Right lobe of liver (tissue), 6 donors: ENCODE measurements at regions of chr15 and their contacts with region 1.

Region 1: DNA sequence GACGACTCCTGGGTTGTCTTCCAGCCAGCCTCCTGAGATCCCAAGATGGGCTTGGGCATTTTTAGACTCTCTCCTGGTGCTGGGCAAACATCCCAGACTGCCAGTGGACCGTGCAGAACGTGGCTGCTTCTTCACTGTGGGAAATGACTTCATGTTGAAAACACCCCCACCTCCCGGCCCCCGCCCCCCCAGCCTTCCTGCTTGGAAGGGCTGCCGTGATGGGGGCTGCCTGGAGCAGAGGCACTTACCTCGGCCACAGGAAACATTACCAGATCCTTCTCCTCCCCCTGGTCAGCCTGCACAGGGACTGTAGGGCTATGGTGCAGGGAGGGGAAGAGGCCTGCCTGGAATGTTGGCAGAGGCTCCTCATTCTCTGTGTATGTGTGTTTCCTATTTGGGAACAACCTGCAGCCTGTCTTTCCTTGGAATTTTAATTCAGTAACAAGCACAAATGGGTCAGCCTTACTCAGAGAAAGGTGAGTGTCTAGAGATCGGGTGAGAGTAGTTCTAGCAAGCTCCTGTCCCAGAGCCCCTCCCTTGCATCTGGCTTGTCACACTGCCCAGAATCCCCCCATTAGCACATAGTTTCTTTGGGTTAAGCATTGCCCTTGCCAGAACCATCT is 90.8 kb downstream of the ANP32A start:
- DNase-seq: no peak
- ATAC-seq: peak in 3 of 4 donors; percentile 35 to 72 (median 64)
- H3K4me3 ChIP-seq: no peak overlapping the region
- H3K27ac ChIP-seq: no peak overlapping the region
- H3K4me1 ChIP-seq: no peaks in the 10 kb centered on the region
- H3K27me3 ChIP-seq: no peaks in the 10 kb centered on the region
- CTCF ChIP-seq: no peak
- POLR2A ChIP-seq: no peak

Region 2: DNA sequence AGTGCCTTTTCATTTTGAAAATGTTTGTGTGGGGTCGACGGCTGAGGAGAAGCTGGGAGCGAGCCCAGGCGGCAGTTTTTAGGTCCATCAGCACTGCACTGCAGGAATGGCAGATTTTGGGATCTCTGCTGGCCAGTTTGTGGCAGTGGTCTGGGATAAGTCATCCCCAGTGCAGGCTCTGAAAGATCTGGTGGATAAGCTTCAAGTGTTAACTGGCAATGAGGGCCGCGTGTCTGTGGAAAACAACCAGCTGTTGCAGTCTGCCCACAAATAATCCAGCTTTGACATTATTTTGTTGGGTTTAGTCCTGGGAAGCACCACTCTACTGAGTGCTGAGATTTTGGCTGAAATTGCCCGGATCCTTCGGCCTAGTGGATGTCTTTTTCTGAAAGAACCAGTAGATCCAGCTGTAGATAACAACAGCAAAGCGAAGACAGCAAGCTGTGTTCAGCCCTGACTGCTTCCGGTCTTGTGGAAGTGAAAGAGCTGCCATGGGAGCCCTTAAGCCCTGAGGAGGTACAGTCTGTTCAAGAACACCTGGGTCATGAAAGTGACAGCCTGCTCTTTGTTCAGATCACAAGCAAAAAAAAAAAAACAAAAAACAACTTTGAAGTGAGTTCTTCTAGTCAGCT is 103.9 kb after region 1 on chr15:
- intact Hi-C with region 1: no loop called
- DNase-seq: no peak
- ATAC-seq: no peak
- H3K4me3 ChIP-seq: no peak overlapping the region
- H3K27ac ChIP-seq: no peak overlapping the region
- H3K4me1 ChIP-seq: no peaks in the 10 kb centered on the region
- H3K27me3 ChIP-seq: no peaks in the 10 kb centered on the region
- CTCF ChIP-seq: no peak
- POLR2A ChIP-seq: no peak

Region 3: DNA sequence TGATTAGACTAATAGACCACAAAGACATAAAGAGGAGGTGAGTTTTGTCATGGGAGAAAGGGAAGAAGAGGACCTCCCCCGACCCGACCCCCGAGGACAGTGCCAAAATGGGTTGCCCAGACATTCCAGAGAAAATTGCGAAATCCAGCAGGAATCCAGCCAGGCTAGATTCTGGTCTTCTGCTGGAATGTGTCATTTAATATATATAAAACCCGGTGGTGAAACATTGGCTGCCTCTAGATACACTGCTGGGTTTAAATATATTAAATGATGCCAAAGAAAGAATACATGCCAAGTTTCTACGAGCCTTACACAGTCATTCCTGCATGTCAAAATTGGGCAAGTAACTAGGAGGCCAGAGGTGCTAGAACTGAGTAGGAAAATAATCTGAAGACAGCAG is 155.2 kb after region 1 on chr15:
- intact Hi-C with region 1: loop called in 1 of 2 experiments (anchors 10 kb)
- DNase-seq: no peak
- ATAC-seq: no peak
- H3K4me3 ChIP-seq: no peak overlapping the region
- H3K27ac ChIP-seq: no peak overlapping the region
- H3K4me1 ChIP-seq: no peaks in the 10 kb centered on the region
- H3K27me3 ChIP-seq: no peaks in the 10 kb centered on the region
- CTCF ChIP-seq: no peak
- POLR2A ChIP-seq: no peak